ENCODE measurements at regions of chr6 and their contacts with region 1.

Region 1: GRCh38 chr6:105952772-105953690 is 133.1 kb upstream of the PRDM1 start:
- DNase-seq: no peak
- H3K4me3 ChIP-seq: no peak overlapping the region
- H3K27ac ChIP-seq: no peak overlapping the region
- H3K4me1 ChIP-seq: no peaks in the 10 kb centered on the region
- H3K27me3 ChIP-seq: no peaks in the 10 kb centered on the region
- CTCF ChIP-seq: no peak

Region 2: GRCh38 chr6:105740946-105741645 is 211.9 kb before region 1 on chr6:
- CTCF ChIA-PET with region 1: no interaction called
- POLR2A ChIA-PET with region 1: interaction called, 18 read pairs
- intact Hi-C with region 1: no loop called
- DNase-seq: no peak
- H3K4me3 ChIP-seq: no peak overlapping the region
- H3K27ac ChIP-seq: no peak overlapping the region
- H3K4me1 ChIP-seq: peaks cover 10% of the 10 kb centered on the region
- H3K27me3 ChIP-seq: no peaks in the 10 kb centered on the region
- CTCF ChIP-seq: no peak

Region 3: GRCh38 chr6:105898286-105898685 is 54.7 kb before region 1 on chr6:
- CTCF ChIA-PET with region 1: no interaction called
- POLR2A ChIA-PET with region 1: no interaction called
- intact Hi-C with region 1: no loop called
- DNase-seq: no peak
- H3K4me3 ChIP-seq: no peak overlapping the region
- H3K27ac ChIP-seq: no peak overlapping the region
- H3K4me1 ChIP-seq: no peaks in the 10 kb centered on the region
- H3K27me3 ChIP-seq: no peaks in the 10 kb centered on the region
- CTCF ChIP-seq: no peak

Region 4: GRCh38 chr6:105981002-105981887 is 28.2 kb after region 1 on chr6:
- CTCF ChIA-PET with region 1: no interaction called
- POLR2A ChIA-PET with region 1: no interaction called
- intact Hi-C with region 1: no loop called
- DNase-seq: no peak
- H3K4me3 ChIP-seq: no peak overlapping the region
- H3K27ac ChIP-seq: no peak overlapping the region
- H3K4me1 ChIP-seq: no peaks in the 10 kb centered on the region
- H3K27me3 ChIP-seq: no peaks in the 10 kb centered on the region
- CTCF ChIP-seq: no peak

Region 5: DNA sequence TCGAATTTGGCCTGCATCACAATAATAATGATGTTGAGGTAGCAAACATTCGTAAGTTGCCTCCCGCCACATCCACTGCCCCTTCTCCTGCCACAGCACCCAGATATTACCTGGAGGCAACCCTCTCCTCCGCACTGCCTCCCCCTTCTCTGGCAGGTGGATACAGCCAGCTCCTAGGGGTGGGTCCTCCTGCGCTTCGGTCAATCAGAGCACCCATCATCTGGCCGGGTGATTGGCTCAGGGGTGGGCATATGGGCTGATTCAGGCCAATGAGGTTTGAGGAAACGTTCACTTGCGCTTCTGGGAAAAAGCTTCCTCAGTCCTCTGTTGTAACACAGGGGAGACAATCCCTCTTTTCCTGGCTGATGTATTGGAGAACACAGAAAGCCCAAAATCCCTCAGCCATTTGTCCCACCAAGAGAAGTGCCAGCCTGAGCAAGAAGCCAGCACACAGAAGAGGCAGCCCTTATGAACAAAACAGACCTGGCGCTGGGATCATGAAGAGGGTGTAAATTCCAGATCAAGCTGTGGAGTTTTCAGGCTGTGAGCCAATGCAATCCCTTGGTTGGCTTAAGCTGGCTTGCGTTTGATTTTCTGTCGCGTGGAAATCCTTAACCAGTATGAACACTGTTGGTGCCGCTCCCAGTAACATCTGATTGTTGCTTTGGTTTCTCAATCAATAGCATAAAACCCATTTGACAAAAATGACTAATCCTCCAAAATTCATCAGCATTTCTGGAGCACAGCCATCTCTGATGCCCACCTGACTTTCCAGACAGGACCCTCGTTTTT is 215.3 kb after region 1 on chr6:
- CTCF ChIA-PET with region 1: no interaction called
- POLR2A ChIA-PET with region 1: no interaction called
- intact Hi-C with region 1: no loop called
- DNase-seq: no peak
- H3K4me3 ChIP-seq: no peak overlapping the region
- H3K27ac ChIP-seq: no peak overlapping the region
- H3K4me1 ChIP-seq: no peaks in the 10 kb centered on the region
- H3K27me3 ChIP-seq: no peaks in the 10 kb centered on the region
- CTCF ChIP-seq: no peak